Activated CD4-positive, alpha-beta T cell treated with anti-CD3 and anti-CD28 coated beads, Interleukin-2, amount 10 ng/mL, durations not matched to agents 24 days and 14 days (primary cell): ENCODE measurements at regions of chr3 and their contacts with region 1.

Region 1: GRCh38 chr3:112111785-112112402 is 21.2 kb downstream of the GCSAM start:
- DNase-seq: peak; percentile 89
- H3K4me3 Mint-ChIP-seq: no peak overlapping the region
- H3K27ac Mint-ChIP-seq: peak overlapping the region; percentile 6
- H3K4me1 Mint-ChIP-seq: peaks cover 21% of the 10 kb centered on the region
- H3K27me3 Mint-ChIP-seq: no peaks in the 10 kb centered on the region

Region 2: DNA sequence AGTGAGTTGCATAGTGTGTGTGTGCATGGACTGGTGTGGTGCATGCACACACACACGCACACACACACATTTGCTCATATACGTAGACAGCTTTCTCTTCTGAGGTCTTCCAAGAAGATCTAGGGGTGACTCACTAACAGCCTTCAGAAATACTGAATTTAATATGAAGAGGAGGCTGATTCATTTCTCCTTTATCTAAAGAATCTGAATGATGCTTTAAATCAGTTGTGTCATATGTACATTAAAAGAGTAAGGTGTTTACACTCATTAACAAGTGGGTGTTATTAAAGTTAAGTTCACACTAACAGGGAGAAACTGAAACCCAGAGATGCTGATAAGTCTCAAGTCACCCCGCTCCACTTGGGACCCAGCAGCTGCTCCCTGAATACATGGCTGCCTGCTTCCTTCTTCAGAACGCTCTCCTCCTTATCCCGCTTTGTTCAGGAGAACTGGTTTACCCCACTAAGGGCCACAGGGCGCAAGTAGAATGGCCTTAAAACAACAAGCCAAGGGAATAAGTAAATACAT is 55.4 kb before region 1 on chr3:
- intact Hi-C with region 1: no loop called
- DNase-seq: peak; percentile 63
- H3K4me3 Mint-ChIP-seq: peak overlapping the region; percentile 27
- H3K27ac Mint-ChIP-seq: peak overlapping the region; percentile 27
- H3K4me1 Mint-ChIP-seq: peaks cover 19% of the 10 kb centered on the region
- H3K27me3 Mint-ChIP-seq: peaks cover 6% of the 10 kb centered on the region

Region 3: DNA sequence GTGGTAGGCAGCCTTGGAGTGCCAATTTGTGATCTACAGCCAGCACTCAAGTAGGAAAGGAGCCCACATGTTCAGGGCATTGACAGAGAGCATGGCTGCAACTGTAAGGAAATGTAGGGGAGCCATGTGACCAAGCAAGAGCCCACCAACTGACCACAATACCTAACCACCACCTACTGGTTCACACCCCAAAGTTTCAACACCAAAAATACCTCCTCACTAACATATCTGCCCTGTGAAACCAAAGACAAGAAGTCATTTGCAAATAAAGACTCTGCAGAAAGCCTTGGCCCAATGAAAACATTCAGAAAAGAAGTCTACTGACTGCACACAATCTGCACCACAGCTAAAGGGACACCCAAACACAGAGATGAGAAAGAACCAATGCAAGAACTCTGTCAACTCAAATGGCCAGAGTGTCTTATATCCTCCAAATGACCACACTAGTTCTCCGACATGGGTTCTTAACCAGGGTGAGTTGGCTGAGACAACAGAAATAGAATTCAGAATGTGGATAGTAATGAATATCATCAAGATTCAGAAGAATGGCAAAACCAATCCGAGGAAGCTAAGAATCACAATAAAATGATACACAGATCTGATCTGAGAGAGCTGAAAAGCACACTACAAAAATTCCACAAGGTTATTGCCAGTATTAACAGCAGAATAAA is 141.5 kb after region 1 on chr3:
- intact Hi-C with region 1: no loop called
- DNase-seq: no peak
- H3K4me3 Mint-ChIP-seq: no peak overlapping the region
- H3K27ac Mint-ChIP-seq: no peak overlapping the region
- H3K4me1 Mint-ChIP-seq: no peaks in the 10 kb centered on the region
- H3K27me3 Mint-ChIP-seq: peaks cover 4% of the 10 kb centered on the region

Region 4: DNA sequence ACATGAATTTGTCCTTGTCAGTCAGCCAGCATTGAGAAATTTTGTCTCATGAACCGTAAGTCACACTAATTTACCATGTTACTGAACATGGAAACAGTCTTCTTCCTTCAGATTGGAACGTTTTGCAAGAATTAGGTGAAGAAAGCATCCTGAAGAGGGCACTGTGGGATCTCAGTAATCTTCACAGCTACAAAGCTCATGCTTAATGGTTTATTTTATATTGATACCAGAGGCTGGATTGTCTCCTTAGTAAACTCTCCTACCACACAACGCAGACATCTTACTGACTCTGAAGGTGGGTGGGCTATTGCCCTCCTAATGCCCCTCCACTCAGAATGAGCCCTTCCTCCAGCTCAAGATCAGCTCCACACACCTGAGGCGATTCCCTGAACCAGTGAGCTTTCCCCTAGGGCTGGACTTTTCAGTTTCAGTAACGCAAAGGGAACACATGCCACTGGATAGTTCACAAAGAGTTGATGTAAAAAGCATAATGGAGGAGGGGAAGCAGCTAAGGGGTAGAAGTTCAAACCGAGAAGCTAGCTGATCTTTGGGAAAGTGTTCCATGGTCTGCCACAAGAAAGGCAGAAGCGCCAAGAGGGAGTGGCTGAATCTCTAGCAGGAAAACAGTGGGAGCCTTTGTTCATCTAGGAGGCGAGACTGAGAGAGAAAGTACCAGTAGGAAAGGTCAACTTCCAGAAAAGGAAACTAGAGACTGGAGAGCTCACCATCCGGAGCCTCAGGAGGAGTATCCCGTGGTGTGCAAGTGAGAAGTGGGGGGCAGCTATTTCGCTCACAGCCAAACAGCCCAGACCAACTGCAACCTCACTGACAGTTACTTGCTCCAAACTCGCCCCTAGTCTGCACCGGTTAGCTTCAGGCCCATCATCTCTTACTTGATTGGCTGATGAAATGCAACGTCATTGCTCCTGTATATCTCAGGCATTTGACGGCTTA is 181.8 kb after region 1 on chr3 and contains the start of gene SLC9C1:
- intact Hi-C with region 1: loop called (anchors 2 kb)
- DNase-seq: peak; percentile 87
- H3K4me3 Mint-ChIP-seq: peak within 1 kb of the TSS; percentile 76
- H3K27ac Mint-ChIP-seq: peak within 1 kb of the TSS; percentile 60
- H3K4me1 Mint-ChIP-seq: peaks cover 26% of the 10 kb centered on the region
- H3K27me3 Mint-ChIP-seq: no peaks in the 10 kb centered on the region
- total RNA-seq, gene SLC9C1: not detected in 2 replicates

Region 5: GRCh38 chr3:112531358-112531781 is 419.5 kb after region 1 on chr3:
- intact Hi-C with region 1: loop called (anchors 5 kb)
- DNase-seq: no peak
- H3K4me3 Mint-ChIP-seq: no peak overlapping the region
- H3K27ac Mint-ChIP-seq: no peak overlapping the region
- H3K4me1 Mint-ChIP-seq: peaks cover 1% of the 10 kb centered on the region
- H3K27me3 Mint-ChIP-seq: no peaks in the 10 kb centered on the region